Right ventricle myocardium superior (tissue), 1 donor: ENCODE measurements at regions of chr6 and their contacts with region 1.

Region 1: DNA sequence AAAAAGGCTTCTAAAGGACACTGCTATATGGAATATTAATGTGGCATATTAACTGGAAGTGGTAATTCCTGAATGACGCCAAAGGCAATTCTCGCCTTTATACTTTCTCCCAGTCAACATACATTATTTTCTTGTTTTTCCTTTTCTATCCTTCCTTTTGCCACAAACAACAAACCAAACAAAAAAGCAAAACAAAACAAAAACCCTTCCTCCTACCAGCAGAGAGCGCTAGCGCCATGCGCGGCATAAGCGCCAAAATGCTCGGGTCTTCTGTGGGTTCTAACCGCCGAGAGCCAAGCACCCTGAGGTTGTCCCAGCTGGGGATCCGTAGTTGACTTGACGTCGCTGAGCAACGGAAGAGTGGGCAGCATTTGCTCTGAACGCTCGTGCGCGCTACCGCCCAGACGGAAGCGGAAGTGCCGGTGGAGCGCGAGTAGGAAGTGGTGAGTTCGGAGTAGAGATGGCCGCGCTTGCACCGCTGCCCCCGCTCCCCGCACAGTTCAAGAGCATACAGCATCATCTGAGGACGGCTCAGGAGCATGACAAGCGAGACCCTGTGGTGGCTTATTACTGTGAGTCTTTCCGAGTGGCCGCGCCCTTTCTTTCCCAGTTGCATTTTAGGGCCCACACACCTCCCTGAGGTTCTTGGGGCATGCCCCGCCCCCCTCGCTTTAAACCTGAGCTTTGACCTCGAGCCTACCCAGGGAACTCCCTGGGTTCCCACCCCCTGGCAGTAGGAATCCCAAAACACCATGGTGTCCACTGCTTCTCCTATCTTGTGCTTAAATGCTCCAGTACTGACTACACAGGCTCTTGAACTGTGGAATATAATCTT is at the starts of genes NMBR and VTA1:
- DNase-seq: peak; percentile 97
- ATAC-seq: peak; percentile 100
- total RNA-seq, gene NMBR: not detected
- total RNA-seq, gene VTA1: 36.0 TPM

Region 2: GRCh38 chr6:142026204-142026880 is 120.7 kb before region 1 on chr6:
- intact Hi-C with region 1: no loop called
- DNase-seq: no peak
- ATAC-seq: no peak

Region 3: DNA sequence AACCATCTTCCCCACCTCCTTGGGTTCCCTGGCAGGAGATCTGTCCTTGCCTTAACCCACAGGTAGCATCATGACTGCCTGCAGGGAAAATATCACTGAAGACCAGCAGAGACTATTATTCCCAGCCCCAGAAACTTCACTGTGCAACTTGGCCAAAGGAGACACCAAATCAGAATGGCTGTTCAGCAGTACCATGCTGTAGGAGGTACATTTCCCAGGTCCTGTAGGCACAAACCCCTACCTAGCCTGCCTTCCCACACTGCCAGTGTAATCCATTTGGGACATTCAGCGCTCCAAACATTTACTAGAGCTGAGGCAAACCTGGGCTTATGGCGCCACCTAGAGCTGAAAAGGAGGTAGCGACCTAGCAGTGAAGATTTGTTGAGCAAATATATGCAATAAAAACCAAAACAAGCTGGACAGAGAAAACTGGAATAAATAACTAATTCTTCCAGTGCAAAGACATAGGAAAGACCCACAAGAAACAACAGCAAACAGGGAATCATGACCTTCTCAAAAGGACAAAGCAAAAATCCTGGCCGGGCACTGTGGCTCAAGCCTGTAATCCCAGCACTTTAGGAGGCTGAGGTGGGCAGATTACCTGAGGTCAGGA is 60.3 kb after region 1 on chr6:
- intact Hi-C with region 1: loop called (anchors 5 kb)
- DNase-seq: no peak
- ATAC-seq: peak; percentile 84

Region 4: DNA sequence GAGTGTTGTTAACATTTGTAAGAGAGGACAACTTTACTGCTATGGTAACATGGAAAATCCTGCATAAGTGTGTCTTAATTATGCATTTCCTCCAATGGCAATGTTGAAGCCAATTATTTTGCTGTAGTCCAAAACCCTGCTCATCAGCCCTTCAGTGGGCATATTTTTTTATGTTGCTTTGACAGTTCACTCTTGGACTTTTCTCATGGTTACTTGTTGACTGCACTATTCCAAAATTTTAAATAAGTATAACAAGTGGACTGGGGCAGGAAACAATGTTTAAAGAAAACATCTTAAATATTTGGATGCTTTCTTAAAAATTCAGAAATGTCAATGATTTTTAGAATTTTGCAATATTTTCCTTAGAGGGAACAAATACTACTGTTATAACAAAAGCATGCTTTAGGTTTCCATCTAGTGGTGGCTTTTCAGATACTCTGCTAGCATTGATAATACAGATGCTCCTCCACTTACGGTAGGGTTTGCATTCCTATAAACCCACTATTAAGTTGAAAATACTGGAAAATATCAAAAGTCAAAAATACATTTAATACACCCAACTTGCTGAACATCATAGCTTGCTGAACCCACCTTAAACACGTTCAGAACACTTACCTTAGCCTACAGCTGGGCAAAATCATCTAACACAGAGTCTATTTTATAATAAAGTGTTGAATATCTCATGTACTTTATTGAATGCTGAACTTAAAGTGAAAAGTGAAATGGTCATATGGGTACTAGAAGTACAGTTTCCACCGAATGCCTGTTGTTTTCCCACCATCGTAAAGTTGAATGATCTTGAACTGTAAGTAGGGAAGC is 241.2 kb after region 1 on chr6:
- intact Hi-C with region 1: loop called (anchors 10 kb)
- DNase-seq: no peak
- ATAC-seq: peak; percentile 58